Left cardiac atrium (tissue), 4 donors: ENCODE measurements at regions of chr18 and their contacts with region 1.

Region 1: GRCh38 chr18:21242141-21242779 is at the start of gene GREB1L:
- DNase-seq: peak; percentile 61
- ATAC-seq: peak; percentile 95 to 96
- total RNA-seq, gene GREB1L: 12.0 to 19.7 TPM

Region 2: GRCh38 chr18:21361307-21361880 is 119.1 kb after region 1 on chr18:
- intact Hi-C with region 1: loop called in 1 of 2 experiments (anchors 10 kb)
- DNase-seq: no peak
- ATAC-seq: peak; percentile 27 to 37

Region 3: DNA sequence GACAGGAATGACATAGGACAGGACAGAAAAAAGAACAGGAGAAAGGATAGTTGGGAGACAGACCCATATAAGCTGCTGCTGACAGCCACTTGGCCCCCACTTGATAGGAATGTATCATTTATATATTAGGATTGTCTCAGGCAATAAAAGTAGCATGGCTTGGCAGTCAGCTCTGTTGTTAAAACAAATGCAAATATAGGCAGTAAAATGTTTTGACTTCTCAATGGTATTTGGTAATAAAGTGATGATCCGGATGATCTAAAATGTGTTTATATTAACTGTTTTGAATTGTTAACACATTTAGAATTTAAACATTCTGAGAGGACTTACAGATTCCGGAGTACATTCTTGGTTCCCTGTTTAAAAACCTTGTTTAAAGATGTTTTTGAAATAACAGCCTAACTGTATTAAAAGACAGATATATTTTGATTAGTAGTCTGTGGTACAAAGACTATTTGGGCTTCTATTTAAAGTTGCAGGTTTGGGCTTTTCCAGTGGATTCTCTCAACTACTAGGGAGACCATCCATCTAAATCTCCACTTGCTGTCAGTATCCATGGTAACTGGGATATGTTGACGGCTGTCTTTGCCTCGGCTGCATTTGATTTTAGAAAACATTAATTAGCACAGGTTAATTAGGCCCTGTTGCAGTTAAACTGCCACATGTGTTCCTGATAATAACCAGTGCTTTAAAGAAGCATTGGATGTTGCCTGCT is 210.7 kb after region 1 on chr18:
- intact Hi-C with region 1: loop called in 1 of 2 experiments (anchors 5 kb)
- DNase-seq: no peak
- ATAC-seq: no peak